ENCODE measurements at regions of chr1 and their contacts with region 1.

Region 1: GRCh38 chr1:179121159-179121938 is 39.5 kb downstream of the TOR3A start:
- DNase-seq: no peak
- H3K4me3 Mint-ChIP-seq: no peak overlapping the region
- H3K27ac Mint-ChIP-seq: no peak overlapping the region
- H3K4me1 Mint-ChIP-seq: peaks cover 8% of the 10 kb centered on the region
- H3K27me3 Mint-ChIP-seq: no peaks in the 10 kb centered on the region

Region 2: DNA sequence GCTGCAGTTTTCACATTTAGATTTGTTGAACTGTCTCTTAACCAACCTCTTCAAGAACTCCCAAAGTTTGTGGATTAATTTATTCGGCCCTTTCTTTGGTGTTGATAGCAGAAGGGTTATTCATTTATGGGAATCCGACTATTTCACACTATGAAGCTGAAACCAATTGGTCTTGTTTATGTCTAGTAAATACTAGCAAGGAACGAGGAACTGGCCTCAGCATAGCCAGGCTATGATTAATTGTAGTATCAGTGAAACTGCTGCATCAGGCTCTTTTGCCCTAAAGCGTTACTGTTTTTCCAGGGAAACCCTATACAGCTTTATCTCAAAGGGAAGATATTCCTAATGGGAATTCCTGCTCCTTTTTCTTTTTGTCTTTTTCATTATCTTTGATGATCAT is 659.7 kb before region 1 on chr1:
- intact Hi-C with region 1: no loop called
- DNase-seq: no peak
- H3K4me3 Mint-ChIP-seq: no peak overlapping the region
- H3K27ac Mint-ChIP-seq: no peak overlapping the region
- H3K4me1 Mint-ChIP-seq: no peaks in the 10 kb centered on the region
- H3K27me3 Mint-ChIP-seq: peaks cover 2% of the 10 kb centered on the region

Region 3: DNA sequence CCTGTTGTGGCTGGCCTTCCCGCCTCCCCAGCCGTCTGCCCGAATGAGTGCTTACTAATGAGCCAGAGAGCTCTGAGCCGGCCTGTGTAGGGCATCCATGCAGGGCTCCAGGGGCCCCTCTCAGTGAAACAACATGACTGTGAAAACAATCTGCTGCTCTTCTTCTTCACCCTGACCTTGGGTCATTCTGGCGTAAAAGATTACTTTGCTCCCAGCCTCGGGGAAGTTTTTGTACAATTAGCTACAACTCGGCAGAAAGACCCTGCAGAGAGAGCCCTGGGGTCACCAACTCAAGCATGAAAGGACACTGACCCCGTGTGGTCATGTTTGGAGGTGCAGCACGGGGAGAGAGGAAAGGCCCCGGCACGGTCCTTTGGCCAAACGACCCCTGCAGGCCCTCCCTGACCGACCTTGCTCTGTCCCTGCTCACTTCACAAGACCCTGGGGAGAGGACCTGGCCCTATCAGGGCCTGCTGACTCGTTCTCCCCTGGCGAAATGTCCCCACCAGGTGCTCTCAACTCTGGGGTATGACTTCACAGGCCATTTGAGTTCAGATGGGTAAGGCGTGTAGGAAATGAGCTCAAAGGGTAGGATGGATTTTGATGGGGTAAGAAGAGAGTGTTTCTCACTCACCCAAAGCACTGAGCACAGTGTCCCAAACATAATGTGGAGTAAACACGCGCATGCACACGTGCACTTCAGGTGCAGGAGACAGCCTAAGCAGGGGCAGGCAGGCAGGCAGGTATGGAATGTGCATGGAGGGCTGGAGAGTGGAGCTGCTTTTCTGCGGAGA is 118.6 kb before region 1 on chr1:
- intact Hi-C with region 1: no loop called
- DNase-seq: peak; percentile 41
- H3K4me3 Mint-ChIP-seq: no peak overlapping the region
- H3K27ac Mint-ChIP-seq: no peak overlapping the region
- H3K4me1 Mint-ChIP-seq: peaks cover 8% of the 10 kb centered on the region
- H3K27me3 Mint-ChIP-seq: peaks cover 3% of the 10 kb centered on the region

Region 4: DNA sequence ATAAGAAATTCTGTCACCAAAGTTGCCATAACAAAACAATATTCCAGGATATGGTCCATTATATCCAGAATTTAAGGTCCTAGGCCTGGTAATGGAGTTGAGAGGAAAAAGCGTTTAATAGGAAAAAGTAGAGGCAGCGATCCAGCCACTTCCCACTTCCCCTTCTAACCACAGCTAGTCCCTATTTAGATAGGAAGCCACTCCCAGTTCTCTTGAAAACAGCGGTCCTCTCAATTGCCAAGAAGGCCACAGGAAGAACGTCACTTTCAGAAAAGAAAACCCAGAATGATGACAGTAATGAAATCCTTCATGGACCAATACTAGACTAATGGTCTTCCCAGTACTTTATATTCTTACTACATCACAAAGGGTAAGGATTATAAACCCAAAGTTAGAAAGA is 69.5 kb after region 1 on chr1:
- intact Hi-C with region 1: loop called (anchors 1 kb)
- DNase-seq: no peak
- H3K4me3 Mint-ChIP-seq: no peak overlapping the region
- H3K27ac Mint-ChIP-seq: peak overlapping the region; percentile 42
- H3K4me1 Mint-ChIP-seq: peaks cover 15% of the 10 kb centered on the region
- H3K27me3 Mint-ChIP-seq: no peaks in the 10 kb centered on the region

Region 5: GRCh38 chr1:179229214-179230140 is 108.1 kb after region 1 on chr1 and contains the start of gene ABL2:
- intact Hi-C with region 1: loop called (anchors 2 kb)
- DNase-seq: peak; percentile 34
- H3K4me3 Mint-ChIP-seq: peak within 1 kb of the TSS; percentile 91
- H3K27ac Mint-ChIP-seq: peak within 1 kb of the TSS; percentile 79
- H3K4me1 Mint-ChIP-seq: peaks cover 24% of the 10 kb centered on the region
- H3K27me3 Mint-ChIP-seq: peaks cover 8% of the 10 kb centered on the region
- total RNA-seq, gene ABL2: 7.7 and 8.5 TPM in 2 replicates

Measured in activated T-helper 2 cell treated with anti-CD3 and anti-CD28 coated beads, Interferon-gamma antibody, Interleukin-2, Interleukin-4, amounts not matched to agents 10 μg/mL and 5 μg/mL and 100 μg/mL, durations not matched to agents 14 hours and 24 hours and 36 hours (primary cell).